ENCODE measurements at regions of chr2 and their contacts with region 1.

Region 1: DNA sequence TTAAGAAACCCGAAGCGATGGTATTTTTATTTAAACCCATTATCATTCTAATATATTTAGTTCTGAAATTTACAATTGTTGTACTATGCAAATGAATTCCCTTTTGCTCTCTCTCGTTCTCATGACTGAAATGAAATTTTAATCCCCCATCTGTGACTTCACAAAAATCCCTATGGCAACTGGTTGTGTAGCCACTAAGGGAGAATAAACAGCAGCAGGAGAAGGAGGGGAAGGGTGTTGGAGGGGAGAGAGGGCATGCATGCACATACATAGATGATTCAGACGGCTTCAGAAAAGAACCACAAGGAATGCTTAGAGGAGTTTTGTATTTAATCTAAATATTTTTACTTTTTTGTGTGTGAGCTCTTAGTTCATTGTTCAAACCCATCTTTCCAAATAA is 36.8 kb downstream of the CPS1 start:
- DNase-seq: no peak
- H3K4me3 ChIP-seq: no peak overlapping the region
- H3K27ac ChIP-seq: no peak overlapping the region
- H3K27me3 ChIP-seq: no peaks in the 10 kb centered on the region
- CTCF ChIP-seq: no peak

Region 2: GRCh38 chr2:210445116-210445707 is 148.0 kb before region 1 on chr2:
- intact Hi-C with region 1: loop called in 1 of 2 experiments (anchors 10 kb)
- DNase-seq: no peak
- H3K4me3 ChIP-seq: no peak overlapping the region
- H3K27ac ChIP-seq: peak overlapping the region in 52 of 59 donors; percentile 2 to 84 (median 68)
- H3K27me3 ChIP-seq: no peaks in the 10 kb centered on the region
- CTCF ChIP-seq: peak; percentile 60 to 92 (median 78)